MCF 10A (cell line): ENCODE measurements at regions of chr19 and their contacts with region 1.

Region 1: GRCh38 chr19:29735800-29736199 is 20.7 kb upstream of the C19orf12 start:
- DNase-seq: no peak
- H3K4me3 Mint-ChIP-seq: no peak overlapping the region
- H3K27ac Mint-ChIP-seq: no peak overlapping the region
- H3K4me1 Mint-ChIP-seq: no peaks in the 10 kb centered on the region
- H3K27me3 Mint-ChIP-seq: peaks cover 59% of the 10 kb centered on the region
- CTCF ChIP-seq: no peak

Region 2: DNA sequence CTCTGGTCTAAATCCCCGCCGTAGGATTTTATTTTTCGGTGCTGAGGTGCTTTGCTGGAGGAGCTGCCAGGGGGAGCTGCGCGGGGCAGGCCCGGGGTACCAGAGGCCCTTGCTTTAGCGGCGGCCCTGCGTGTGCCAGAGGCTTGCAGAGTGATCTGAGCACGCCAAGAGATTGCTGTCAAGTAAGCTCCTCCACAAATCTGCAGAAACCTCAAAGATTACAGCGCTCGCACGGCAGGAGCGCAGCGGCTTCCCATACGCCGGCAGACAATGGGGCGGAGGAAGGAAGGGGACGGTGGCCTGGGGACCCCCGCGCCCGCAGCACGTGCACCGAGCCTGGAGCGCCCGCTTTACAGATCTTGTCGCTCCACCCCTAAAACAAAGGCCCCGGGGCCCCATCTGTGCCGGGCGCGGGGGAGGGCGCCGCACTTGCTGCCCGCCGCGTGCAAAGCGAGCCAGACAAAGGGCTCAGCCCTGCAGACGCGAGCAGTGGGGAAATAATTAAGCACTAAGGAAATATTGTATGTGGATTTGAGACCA is 11.6 kb before region 1 on chr19:
- CTCF ChIA-PET with region 1: interaction called, 14 read pairs
- POLR2A ChIA-PET with region 1: no interaction called
- intact Hi-C with region 1: no loop called
- DNase-seq: no peak
- H3K4me3 Mint-ChIP-seq: no peak overlapping the region
- H3K27ac Mint-ChIP-seq: no peak overlapping the region
- H3K4me1 Mint-ChIP-seq: no peaks in the 10 kb centered on the region
- H3K27me3 Mint-ChIP-seq: no peaks in the 10 kb centered on the region
- CTCF ChIP-seq: no peak